ENCODE measurements at regions of chr4 and their contacts with region 1.

Region 1: GRCh38 chr4:27000820-27001219 is 140.2 kb downstream of the STIM2 start:
- H3K4me3 Mint-ChIP-seq: no peak overlapping the region
- H3K27ac Mint-ChIP-seq: no peak overlapping the region
- H3K4me1 Mint-ChIP-seq: no peaks in the 10 kb centered on the region
- H3K27me3 Mint-ChIP-seq: no peaks in the 10 kb centered on the region

Region 2: DNA sequence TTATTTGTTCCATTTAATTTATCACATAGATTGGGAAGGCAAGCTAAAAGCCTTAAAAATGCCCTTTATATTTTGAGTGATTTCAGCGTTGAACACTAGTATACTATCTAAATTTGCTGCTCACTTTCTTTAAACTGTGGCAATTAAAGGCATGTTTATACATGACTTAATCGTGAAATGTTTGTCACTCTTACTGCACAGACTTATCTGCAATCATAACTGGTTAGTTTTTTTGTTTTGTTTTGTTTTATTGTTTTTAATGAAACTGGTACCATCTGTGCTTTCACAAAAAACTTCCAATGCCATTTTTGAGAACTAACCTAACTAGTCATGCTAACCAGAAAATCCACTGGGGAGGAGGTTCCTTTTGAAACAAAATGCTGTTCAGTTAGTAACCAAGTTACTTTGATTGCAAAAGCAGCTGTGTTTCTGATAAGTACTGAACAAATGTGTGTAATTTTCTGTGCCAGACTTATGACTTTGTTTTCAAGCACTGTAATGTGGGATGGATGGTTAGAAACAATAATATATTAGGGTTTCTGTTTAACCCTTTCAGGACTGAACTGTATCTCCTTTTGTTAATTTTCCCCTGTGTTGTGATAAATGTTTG is 566.7 kb before region 1 on chr4:
- intact Hi-C with region 1: loop called (anchors 10 kb)
- H3K4me3 Mint-ChIP-seq: no peak overlapping the region
- H3K27ac Mint-ChIP-seq: no peak overlapping the region
- H3K4me1 Mint-ChIP-seq: peaks cover 10% of the 10 kb centered on the region
- H3K27me3 Mint-ChIP-seq: no peaks in the 10 kb centered on the region